Cardiac septum (tissue), 1 donor: ENCODE measurements at regions of chr3 and their contacts with region 1.

Region 1: GRCh38 chr3:48989796-48990635 is at the start of gene P4HTM:
- DNase-seq: peak; percentile 91
- total RNA-seq, gene P4HTM: 37.0 TPM

Region 2: DNA sequence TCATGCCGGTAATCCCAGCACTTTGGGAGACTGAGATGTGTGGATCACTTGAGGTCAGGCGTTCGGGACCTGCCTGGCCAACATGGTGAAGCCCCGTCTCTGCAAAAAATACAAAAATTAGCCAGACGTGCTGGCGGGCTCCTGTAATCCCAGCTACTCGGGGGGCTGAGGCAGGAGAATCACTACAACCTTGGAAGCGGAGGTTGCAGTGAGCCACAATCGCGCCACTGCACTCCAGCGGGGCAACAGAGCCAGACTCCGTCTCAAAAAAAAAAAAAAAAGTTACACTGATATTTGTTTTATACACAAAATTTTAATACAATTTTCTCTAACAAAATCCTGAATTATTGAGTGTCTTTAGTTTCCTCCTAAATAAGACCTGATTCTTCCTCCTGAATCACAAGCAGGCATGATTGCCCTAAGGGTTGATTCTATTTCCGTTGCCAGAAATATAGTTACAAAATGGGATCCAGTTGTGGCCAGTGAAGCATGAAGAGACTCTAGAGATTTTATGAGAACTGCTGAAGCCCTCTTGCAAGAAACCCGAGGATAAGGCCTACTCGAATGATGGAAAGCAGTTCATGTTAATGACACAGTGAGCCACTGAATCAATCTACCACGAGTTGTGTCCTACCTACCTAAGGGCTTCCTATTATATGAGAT is 1198.7 kb before region 1 on chr3:
- intact Hi-C with region 1: no loop called
- DNase-seq: no peak

Region 3: GRCh38 chr3:49007068-49007770 is 17.2 kb after region 1 on chr3 and contains the start of gene WDR6:
- intact Hi-C with region 1: loop called (anchors 2 kb)
- DNase-seq: peak; percentile 98
- total RNA-seq, gene WDR6: 96.6 TPM

Region 4: GRCh38 chr3:49093853-49094767 is 104.1 kb after region 1 on chr3 and contains the start of gene QRICH1:
- intact Hi-C with region 1: loop called (anchors 5 kb)
- DNase-seq: peak; percentile 98
- total RNA-seq, gene QRICH1: 54.5 TPM